Heart right ventricle (tissue), 16 donors: ENCODE measurements at regions of chr6 and their contacts with region 1.

Region 1: GRCh38 chr6:141169419-141169818 is 963.3 kb upstream of the GJE1 start:
- DNase-seq: no peak
- ATAC-seq: no peak
- H3K4me3 ChIP-seq: no peak overlapping the region
- H3K27ac ChIP-seq: no peak overlapping the region
- H3K4me1 ChIP-seq: peaks cover 0 to 14% (median 7%) of the 10 kb centered on the region in 9 donors
- H3K27me3 ChIP-seq: no peaks in the 10 kb centered on the region
- CTCF ChIP-seq: no peak

Region 2: GRCh38 chr6:141464490-141464889 is 295.1 kb after region 1 on chr6:
- intact Hi-C with region 1: loop called in 1 of 10 experiments (anchors 10 kb)
- DNase-seq: peak in 1 of 2 donors; percentile 21
- ATAC-seq: peak; percentile 70 to 92 (median 89)
- H3K4me3 ChIP-seq: no peak overlapping the region
- H3K27ac ChIP-seq: peak overlapping the region in 9 of 10 donors; percentile 24 to 86 (median 80)
- H3K4me1 ChIP-seq: peaks cover 0 to 27% (median 15%) of the 10 kb centered on the region in 9 donors
- H3K27me3 ChIP-seq: no peaks in the 10 kb centered on the region
- CTCF ChIP-seq: no peak